B cell (primary cell): ENCODE measurements at regions of chr7 and their contacts with region 1.

Region 1: GRCh38 chr7:142471820-142472219 is 214.0 kb upstream of the PRSS58 start:
- DNase-seq: no peak
- ATAC-seq: no peak
- H3K4me3 ChIP-seq: no peak overlapping the region
- H3K4me3 Mint-ChIP-seq: no peak overlapping the region
- H3K27ac ChIP-seq: no peak overlapping the region
- H3K27ac Mint-ChIP-seq: no peak overlapping the region
- H3K4me1 ChIP-seq: peaks cover 3 to 4% of the 10 kb centered on the region in 2 donors
- H3K4me1 Mint-ChIP-seq: peaks cover 5% of the 10 kb centered on the region
- H3K27me3 ChIP-seq: peaks cover 0 to 6% (median 2%) of the 10 kb centered on the region in 4 experiments
- H3K27me3 Mint-ChIP-seq: peaks cover 27% of the 10 kb centered on the region
- CTCF ChIP-seq: no peak

Region 2: DNA sequence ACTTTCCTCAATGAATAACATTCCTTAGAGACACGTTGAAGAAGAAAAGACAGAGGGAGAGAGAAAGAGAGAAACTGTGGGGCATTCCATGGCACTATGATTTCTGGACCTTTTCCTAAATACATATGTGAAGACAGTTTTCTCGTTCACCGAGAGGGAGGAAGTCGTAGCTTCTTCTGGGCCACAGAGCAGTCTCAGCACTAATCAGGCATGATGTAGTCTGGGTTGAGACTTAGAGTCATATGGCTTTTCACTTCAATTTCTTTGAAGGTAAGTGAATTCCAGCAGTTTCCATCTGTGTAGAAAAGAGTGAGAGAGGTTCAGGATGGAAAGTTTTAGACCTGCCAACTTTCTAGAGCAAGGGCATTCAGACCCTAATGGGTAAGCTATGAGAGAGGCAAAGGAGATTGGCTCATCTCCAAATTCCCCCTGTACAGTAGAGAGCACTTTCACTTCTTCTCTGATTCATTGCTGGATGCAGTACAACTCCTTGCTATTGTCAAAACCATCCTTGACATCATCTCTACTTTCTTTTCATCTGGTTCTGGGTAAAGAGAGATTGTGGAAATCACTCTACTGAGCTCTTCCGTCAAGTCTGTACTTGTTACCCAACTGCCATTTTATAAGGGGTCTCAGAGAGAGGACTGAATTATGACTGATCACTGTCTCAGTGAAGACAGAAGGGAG is 587.1 kb before region 1 on chr7:
- CTCF ChIA-PET with region 1: no interaction called
- POLR2A ChIA-PET with region 1: no interaction called
- intact Hi-C with region 1: no loop called
- DNase-seq: no peak
- ATAC-seq: no peak
- H3K4me3 ChIP-seq: no peak overlapping the region
- H3K4me3 Mint-ChIP-seq: no peak overlapping the region
- H3K27ac ChIP-seq: no peak overlapping the region
- H3K27ac Mint-ChIP-seq: no peak overlapping the region
- H3K4me1 ChIP-seq: no peaks in the 10 kb centered on the region
- H3K4me1 Mint-ChIP-seq: no peaks in the 10 kb centered on the region
- H3K27me3 ChIP-seq: no peaks in the 10 kb centered on the region
- H3K27me3 Mint-ChIP-seq: no peaks in the 10 kb centered on the region
- CTCF ChIP-seq: no peak

Region 3: DNA sequence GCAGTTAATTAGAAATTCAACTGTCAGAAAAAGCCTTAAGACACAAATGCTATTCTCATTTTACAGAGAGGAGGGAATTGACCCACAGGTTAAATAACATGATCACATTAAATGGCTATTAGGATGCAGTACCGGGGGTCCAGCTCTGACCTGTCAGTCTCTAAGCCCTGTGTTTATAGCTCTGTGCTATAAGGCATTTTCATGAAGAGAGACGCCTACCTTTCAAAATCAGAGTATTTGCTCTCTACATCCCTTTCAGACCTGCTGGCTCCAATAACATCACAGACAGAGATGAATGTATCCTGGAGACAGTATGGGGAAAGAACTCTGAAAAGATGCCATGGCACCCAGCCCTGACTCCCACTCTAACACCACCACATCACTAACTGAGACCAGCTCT is 24.1 kb before region 1 on chr7:
- CTCF ChIA-PET with region 1: no interaction called
- POLR2A ChIA-PET with region 1: no interaction called
- intact Hi-C with region 1: no loop called
- DNase-seq: no peak
- ATAC-seq: no peak
- H3K4me3 ChIP-seq: no peak overlapping the region
- H3K4me3 Mint-ChIP-seq: no peak overlapping the region
- H3K27ac ChIP-seq: no peak overlapping the region
- H3K27ac Mint-ChIP-seq: no peak overlapping the region
- H3K4me1 ChIP-seq: no peaks in the 10 kb centered on the region
- H3K4me1 Mint-ChIP-seq: no peaks in the 10 kb centered on the region
- H3K27me3 ChIP-seq: no peaks in the 10 kb centered on the region
- H3K27me3 Mint-ChIP-seq: peaks cover 32% of the 10 kb centered on the region
- CTCF ChIP-seq: no peak

Region 4: GRCh38 chr7:142508258-142508689 is 36.5 kb after region 1 on chr7:
- CTCF ChIA-PET with region 1: no interaction called
- POLR2A ChIA-PET with region 1: no interaction called
- intact Hi-C with region 1: loop called (anchors 1 kb)
- DNase-seq: no peak
- ATAC-seq: no peak
- H3K4me3 ChIP-seq: no peak overlapping the region
- H3K4me3 Mint-ChIP-seq: no peak overlapping the region
- H3K27ac ChIP-seq: no peak overlapping the region
- H3K27ac Mint-ChIP-seq: no peak overlapping the region
- H3K4me1 ChIP-seq: no peaks in the 10 kb centered on the region
- H3K4me1 Mint-ChIP-seq: no peaks in the 10 kb centered on the region
- H3K27me3 ChIP-seq: peaks cover 0 to 4% (median 0%) of the 10 kb centered on the region in 4 experiments
- H3K27me3 Mint-ChIP-seq: peaks cover 34% of the 10 kb centered on the region
- CTCF ChIP-seq: no peak